ENCODE measurements at regions of chr9 and their contacts with region 1.

Region 1: GRCh38 chr9:19641046-19641445 is 147.8 kb downstream of the SLC24A2 start:
- DNase-seq: peak; percentile 0
- H3K4me3 ChIP-seq: no peak overlapping the region
- H3K27ac ChIP-seq: no peak overlapping the region
- H3K4me1 ChIP-seq: no peaks in the 10 kb centered on the region
- H3K27me3 ChIP-seq: no peaks in the 10 kb centered on the region
- CTCF ChIP-seq: no peak

Region 2: DNA sequence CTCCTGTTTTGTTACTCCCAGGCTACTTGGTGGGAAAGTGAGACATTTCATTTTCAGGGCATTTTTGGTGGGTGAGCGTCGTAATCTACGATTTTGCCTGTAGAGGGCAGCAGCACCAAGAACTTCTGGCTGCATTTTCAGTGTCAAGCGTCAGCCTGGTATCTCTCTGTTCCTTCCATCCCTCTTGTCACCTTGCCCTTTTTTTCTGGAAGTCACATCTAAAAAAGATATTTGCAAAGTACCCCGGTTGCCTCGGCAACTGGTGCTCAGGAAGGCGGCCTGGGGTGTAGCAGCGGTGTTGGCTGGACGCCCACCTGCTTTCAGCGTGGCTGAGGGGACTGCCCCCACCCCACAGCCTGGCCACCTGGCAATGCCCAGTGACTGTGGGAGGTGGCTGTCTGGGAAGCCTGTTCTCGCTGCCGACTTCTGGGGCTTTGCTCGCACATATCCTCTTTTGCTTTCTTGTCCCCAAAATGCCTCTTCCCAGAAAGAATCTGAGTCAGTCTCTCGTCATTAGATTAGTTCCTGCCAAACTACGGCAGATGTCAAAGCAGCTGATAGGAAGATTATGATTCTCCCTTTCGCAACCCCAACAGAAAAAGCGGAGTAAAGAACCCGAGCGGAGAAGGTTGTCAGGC is 147.8 kb before region 1 on chr9:
- CTCF ChIA-PET with region 1: no interaction called
- POLR2A ChIA-PET with region 1: no interaction called
- intact Hi-C with region 1: loop called (anchors 5 kb)
- DNase-seq: peak; percentile 44
- H3K4me3 ChIP-seq: no peak overlapping the region
- H3K27ac ChIP-seq: no peak overlapping the region
- H3K4me1 ChIP-seq: no peaks in the 10 kb centered on the region
- H3K27me3 ChIP-seq: no peaks in the 10 kb centered on the region
- CTCF ChIP-seq: peak; percentile 62